ENCODE measurements at regions of chr6 and their contacts with region 1.

Region 1: DNA sequence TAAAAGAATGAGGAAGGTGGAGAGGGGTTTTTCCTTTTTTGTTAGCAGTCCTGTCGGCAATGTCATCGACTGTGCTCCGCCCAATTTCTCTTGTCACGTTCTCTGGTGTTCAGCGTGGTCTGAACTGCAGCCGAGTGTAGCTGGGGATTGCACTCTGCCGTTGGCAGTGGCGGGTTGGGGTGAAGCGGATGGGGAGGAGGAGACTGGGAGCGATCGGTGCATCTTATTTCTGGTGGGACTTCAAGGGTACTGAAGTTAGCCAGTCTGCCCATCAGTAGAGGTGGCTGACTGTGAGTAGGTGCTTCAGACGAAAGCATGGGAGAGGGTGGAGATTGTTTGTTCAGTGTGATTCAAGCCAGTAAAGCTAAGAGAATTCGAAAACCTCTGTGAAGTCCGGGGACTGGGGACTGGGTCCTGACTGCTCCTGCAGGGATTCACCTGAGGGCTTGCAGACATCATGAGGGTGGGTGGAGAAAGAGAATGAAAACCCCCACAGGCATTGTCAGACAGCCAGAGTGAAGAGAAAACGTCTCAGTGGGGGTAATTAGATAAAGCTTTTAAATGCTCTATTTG is 5.1 kb downstream of the RREB1 start:
- DNase-seq: peak; percentile 31
- H3K4me3 ChIP-seq: no peak overlapping the region
- H3K27ac ChIP-seq: peak overlapping the region; percentile 2 to 58
- H3K4me1 ChIP-seq: peaks cover 12% of the 10 kb centered on the region
- H3K27me3 ChIP-seq: no peaks in the 10 kb centered on the region
- CTCF ChIP-seq: no peak
- POLR2A ChIP-seq: peak; percentile 48

Region 2: DNA sequence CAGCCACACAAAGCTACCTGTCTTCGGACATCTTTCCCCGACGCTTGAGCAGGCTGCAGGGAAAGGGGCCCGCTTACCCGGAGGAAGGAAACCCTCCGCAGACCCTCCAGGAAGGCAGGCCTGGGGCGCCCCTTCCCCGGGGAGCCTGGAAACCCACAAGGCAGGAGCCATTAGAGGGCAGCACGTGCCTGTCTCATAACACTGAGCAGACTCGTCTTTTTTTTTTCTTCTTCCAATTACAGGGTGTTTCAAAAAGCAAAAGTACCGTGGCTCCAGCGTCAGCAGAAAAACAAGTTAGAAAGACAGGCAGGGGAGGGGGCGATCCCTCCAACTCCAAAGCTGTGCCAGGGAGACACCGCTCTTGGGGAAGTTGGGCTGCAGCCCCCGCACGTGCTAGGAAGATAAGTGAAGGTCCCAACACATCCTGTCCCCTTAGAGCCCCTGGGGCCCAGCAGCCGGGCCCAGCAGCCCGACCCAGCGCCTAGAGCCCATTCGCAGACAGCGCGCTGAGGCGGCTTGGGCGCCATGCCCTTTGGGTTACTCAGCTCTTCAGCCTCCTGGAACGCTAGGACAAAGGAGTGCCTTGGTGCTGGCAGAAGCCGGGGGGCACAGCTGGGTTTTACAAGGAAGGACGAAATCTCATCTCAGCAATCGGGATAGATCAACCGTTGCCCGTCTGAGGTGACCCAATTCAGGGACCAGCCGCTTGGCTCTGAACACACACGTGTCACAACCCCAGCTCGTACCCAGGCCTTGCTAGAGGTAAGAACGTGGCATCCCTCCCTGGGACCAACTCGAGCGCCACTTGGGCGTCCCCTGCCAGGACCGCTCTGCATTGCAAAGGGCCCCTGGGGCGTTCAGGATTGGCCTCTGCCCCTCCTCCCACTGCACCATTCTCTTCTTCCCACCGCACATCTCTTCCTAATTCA is 388.0 kb before region 1 on chr6:
- intact Hi-C with region 1: loop called (anchors 10 kb)
- DNase-seq: peak; percentile 63
- H3K4me3 ChIP-seq: peak overlapping the region; percentile 18 to 24
- H3K27ac ChIP-seq: peak overlapping the region; percentile 72 to 74
- H3K4me1 ChIP-seq: peaks cover 8% of the 10 kb centered on the region
- H3K27me3 ChIP-seq: no peaks in the 10 kb centered on the region
- CTCF ChIP-seq: peak; percentile 56 to 72 (median 64)
- POLR2A ChIP-seq: no peak

Measured in prostate gland (tissue), 2 donors.